SK-N-SH (cell line): ENCODE measurements at regions of chr5 and their contacts with region 1.

Region 1: DNA sequence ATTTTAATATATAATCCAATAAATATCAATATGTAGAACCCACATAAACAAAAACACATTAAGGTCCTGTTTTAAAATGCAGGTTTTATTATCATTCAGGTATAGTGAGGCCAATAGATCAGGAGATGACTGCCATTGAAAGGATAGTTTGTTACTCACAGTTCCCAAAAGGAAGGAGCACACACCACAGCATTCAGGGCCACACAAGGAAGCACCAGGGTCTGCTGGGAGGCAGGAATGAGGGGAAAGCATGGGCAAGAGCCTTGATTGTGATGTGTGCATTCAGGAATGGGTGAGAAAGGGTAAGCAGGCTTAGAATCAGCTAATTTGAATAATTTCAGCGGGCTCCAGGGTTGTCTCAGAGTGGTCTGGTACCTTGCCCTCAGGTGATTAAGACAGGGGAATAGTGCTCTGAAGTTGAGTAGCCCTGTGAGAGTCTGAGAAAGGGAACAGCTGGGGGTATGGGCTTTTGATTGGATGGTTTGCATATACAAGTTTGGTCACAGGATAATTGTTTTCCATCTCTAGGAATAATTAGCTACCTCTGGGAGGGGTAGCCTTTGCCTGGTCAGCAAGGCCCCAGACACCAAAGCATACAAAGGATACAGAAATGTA is 19.8 kb upstream of the OTULIN start:
- DNase-seq: no peak
- H3K4me3 ChIP-seq: no peak overlapping the region
- H3K27ac ChIP-seq: no peak overlapping the region
- H3K4me1 ChIP-seq: no peaks in the 10 kb centered on the region
- H3K27me3 ChIP-seq: peaks cover 6% of the 10 kb centered on the region; the same call in 1 of the 2 replicates
- CTCF ChIP-seq: no peak
- EP300 ChIP-seq: no peak
- RAD21 ChIP-seq: no peak

Region 2: GRCh38 chr5:14342306-14342705 is 302.4 kb before region 1 on chr5:
- CTCF ChIA-PET with region 1: interaction called, 13 read pairs
- POLR2A ChIA-PET with region 1: no interaction called
- DNase-seq: no peak
- H3K4me3 ChIP-seq: no peak overlapping the region
- H3K27ac ChIP-seq: peak overlapping the region in 1 of 2 experiments; percentile 25; a peak in 1 of 4 replicates
- H3K4me1 ChIP-seq: peaks cover 6 to 10% of the 10 kb centered on the region in 2 experiments; a peak in 2 of 4 replicates
- H3K27me3 ChIP-seq: no peaks in the 10 kb centered on the region
- CTCF ChIP-seq: no peak
- EP300 ChIP-seq: no peak
- RAD21 ChIP-seq: no peak

Region 3: GRCh38 chr5:14410394-14411201 is 234.1 kb before region 1 on chr5:
- CTCF ChIA-PET with region 1: interaction called, 10 read pairs
- POLR2A ChIA-PET with region 1: no interaction called
- DNase-seq: peak; percentile 82
- H3K4me3 ChIP-seq: peak overlapping the region in 1 of 2 experiments; percentile 12; a peak in 3 of 4 replicates
- H3K27ac ChIP-seq: peak overlapping the region; percentile 98 to 100
- H3K4me1 ChIP-seq: peaks cover 49 to 76% of the 10 kb centered on the region in 2 experiments
- H3K27me3 ChIP-seq: no peaks in the 10 kb centered on the region
- CTCF ChIP-seq: no peak; the same call in 1 of the 2 replicates
- EP300 ChIP-seq: peak; percentile 64 to 95
- RAD21 ChIP-seq: peak; percentile 42

Region 4: DNA sequence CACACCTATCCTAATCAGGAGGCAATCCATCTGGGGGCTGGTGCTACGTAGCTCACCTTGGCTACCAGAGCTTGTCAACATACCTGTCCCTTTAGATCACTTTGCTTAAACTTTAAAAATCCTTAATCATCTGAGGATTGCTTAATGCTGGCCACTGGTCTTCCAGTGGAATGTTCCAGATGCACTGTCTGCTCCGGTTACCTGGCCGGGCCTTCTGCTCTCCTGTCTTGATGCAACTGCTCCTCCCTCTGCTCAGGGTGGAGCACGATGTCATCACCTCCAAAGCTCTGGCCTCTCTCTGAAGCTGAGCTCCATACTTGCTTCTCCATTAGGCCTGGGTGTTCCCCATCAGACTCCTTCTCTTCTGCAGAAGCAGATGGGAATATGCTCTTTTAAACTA is 169.7 kb before region 1 on chr5:
- CTCF ChIA-PET with region 1: interaction called, 14 read pairs
- POLR2A ChIA-PET with region 1: no interaction called
- DNase-seq: no peak
- H3K4me3 ChIP-seq: no peak overlapping the region
- H3K27ac ChIP-seq: peak overlapping the region; percentile 51 to 74; a peak in 3 of 4 replicates
- H3K4me1 ChIP-seq: peaks cover 17 to 18% of the 10 kb centered on the region in 2 experiments; a peak in 3 of 4 replicates
- H3K27me3 ChIP-seq: no peaks in the 10 kb centered on the region
- CTCF ChIP-seq: no peak
- EP300 ChIP-seq: no peak
- RAD21 ChIP-seq: no peak

Region 5: DNA sequence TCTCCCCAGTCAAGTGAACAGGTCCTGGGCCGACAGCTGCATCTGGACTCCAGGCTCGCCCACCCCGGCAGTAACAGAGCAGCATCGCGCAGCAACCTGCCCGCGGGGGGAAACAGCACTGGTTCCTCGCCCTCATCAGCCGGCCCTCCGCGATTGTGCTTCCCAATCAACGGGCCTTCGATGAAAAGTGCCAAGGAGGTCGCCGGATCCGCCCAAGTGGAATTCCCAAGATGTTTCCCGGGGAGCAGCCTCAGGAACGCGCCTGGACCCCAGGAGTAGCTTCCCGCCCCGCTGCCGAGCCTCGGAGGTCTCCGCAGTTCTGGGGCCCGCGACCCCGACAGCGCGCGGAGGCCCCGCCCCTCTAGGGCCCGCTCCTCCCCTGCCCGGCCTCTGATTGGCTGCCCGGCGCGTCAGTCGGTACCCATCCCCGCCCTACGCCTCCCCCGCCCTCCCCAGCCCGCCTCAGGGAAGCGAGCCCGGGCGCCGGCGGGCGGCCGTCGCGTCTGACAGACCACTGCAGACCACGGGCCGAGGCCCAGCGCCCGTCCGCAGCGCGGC is 63.3 kb before region 1 on chr5 and contains the start of gene OTULINL:
- CTCF ChIA-PET with region 1: interaction called, 22 read pairs
- POLR2A ChIA-PET with region 1: interaction called, 3 read pairs
- DNase-seq: peak; percentile 100
- H3K4me3 ChIP-seq: peak within 1 kb of the TSS; percentile 58 to 62
- H3K27ac ChIP-seq: peak within 1 kb of the TSS in 1 of 2 experiments; percentile 79; a peak in 2 of 4 replicates
- H3K4me1 ChIP-seq: peaks cover 0 to 16% of the 10 kb centered on the region in 2 experiments; a peak in 1 of 4 replicates
- H3K27me3 ChIP-seq: peaks cover 57% of the 10 kb centered on the region
- CTCF ChIP-seq: no peak
- EP300 ChIP-seq: no peak; a peak in 1 of 4 replicates
- RAD21 ChIP-seq: no peak
- polyA plus RNA-seq, gene OTULINL: 0.26 and 0.62 TPM in 2 replicates

Region 6: DNA sequence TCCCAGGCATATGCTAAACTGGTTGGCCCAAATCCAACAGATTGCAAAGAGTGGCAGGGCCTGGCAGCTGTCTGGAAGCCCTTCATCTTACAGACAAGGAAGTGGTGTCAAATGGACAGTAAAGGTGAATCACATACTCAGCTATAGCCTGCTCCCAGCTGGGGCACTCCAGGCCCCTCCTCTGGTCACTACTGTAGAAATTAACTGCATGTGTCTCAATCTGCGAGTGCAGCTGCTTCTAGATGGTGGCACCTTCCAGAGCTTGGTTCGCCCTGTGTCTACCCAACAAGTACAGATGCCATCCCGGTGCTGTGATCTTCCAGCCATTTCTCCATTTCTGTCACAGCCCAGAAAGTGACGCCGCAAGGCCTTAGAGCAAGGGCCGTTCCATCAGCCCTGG is 70.0 kb after region 1 on chr5:
- CTCF ChIA-PET with region 1: no interaction called
- POLR2A ChIA-PET with region 1: no interaction called
- DNase-seq: no peak
- H3K4me3 ChIP-seq: no peak overlapping the region
- H3K27ac ChIP-seq: no peak overlapping the region; a peak in 1 of 4 replicates
- H3K4me1 ChIP-seq: peaks cover 0 to 8% of the 10 kb centered on the region in 2 experiments; a peak in 1 of 4 replicates
- H3K27me3 ChIP-seq: no peaks in the 10 kb centered on the region
- CTCF ChIP-seq: no peak
- EP300 ChIP-seq: no peak
- RAD21 ChIP-seq: no peak